ENCODE measurements at regions of chr10 and their contacts with region 1.

Region 1: DNA sequence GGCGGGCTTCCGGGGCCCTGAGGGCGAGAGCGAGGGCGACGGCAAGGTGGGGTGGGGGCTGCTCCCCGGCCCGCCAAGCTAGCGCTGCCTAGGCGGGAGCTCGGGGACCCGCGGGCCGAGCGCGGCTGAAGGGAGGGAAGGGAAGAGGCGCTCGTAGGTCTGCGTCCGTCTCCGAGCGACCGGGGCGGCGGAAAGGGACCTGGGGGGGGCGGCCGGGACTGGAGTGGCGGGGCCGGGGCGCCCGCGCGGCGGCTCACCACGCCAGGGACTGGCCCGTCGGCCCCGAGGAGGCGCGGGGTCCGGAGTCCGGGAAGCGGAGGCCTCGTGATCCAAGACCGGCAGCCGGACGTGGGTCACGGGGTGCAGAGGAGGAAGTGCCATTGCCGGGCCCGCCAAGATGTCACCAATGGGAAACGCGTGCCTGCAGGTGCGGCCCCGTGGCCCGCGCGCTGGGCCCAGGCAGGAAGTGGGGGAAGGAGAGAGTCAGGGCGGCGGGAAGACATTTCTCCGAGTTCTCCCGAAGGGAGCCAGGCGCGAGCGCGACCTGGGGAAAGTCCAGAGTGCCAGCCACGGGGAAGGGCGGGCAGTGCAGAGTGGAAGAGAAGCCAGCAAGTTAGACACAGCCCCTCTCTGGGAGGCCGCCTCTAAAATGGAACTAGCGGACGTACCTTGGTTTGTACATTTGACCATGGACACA is 11.9 kb downstream of the HNRNPF start:
- DNase-seq: peak; percentile 76 to 94
- H3K4me3 ChIP-seq: peak overlapping the region; percentile 75 to 81
- H3K27ac ChIP-seq: peak overlapping the region; percentile 97 to 99
- H3K4me1 ChIP-seq: peaks cover 7 to 40% of the 10 kb centered on the region in 2 donors
- H3K27me3 ChIP-seq: no peaks in the 10 kb centered on the region
- CTCF ChIP-seq: no peak

Region 2: DNA sequence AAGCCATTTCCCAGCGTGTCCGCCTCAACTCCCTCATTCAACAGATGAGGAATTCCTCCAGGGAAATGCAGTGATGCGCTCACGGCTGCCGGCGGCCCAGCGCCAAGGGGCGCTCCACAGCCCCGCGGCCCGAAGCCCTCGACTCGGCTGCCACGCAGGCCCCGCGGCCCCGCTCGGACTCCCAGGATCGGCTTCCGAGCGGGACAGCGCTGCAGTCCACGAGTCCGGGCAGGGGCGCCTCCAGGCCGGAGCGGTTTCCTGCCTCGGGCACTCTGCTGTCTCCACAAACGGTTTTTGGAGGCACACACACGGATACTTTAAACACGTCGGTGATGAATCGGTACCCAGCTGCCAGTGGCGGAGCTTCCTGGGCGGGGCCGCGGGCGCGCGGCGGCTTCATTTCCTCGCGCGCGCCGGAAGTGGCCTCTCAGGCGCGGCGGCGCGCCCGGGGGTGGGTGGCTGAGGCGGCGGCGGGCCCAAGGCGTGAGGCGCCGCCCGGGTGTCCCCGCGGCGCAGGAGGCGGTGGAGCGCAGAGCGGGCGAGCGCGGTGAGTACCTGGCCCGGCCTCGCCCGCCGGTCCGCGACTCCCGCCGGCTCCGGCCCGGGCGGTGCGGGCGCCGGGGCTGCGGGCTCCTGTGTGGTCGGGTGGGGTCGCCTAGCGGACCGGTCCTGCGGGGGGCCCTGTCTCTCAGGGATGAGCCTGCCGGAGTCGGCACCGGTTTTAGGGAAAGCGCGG is 258.9 kb before region 1 on chr10 and contains the start of gene CSGALNACT2:
- intact Hi-C with region 1: loop called (anchors 2 kb)
- DNase-seq: peak; percentile 64 to 95
- H3K4me3 ChIP-seq: peak within 1 kb of the TSS; percentile 85 to 87
- H3K27ac ChIP-seq: peak within 1 kb of the TSS; percentile 92 to 98
- H3K4me1 ChIP-seq: peaks cover 0 to 15% of the 10 kb centered on the region in 2 donors
- H3K27me3 ChIP-seq: no peaks in the 10 kb centered on the region
- CTCF ChIP-seq: no peak
- total RNA-seq, gene CSGALNACT2: 19.7 TPM

Region 3: GRCh38 chr10:43420369-43421200 is 23.5 kb after region 1 on chr10:
- intact Hi-C with region 1: loop called (anchors 2 kb)
- DNase-seq: peak; percentile 63 to 94
- H3K4me3 ChIP-seq: peak overlapping the region; percentile 72 to 73
- H3K27ac ChIP-seq: peak overlapping the region; percentile 94 to 95
- H3K4me1 ChIP-seq: peaks cover 0 to 12% of the 10 kb centered on the region in 2 donors
- H3K27me3 ChIP-seq: no peaks in the 10 kb centered on the region
- CTCF ChIP-seq: peak in 1 of 3 experiments; percentile 14

Region 4: DNA sequence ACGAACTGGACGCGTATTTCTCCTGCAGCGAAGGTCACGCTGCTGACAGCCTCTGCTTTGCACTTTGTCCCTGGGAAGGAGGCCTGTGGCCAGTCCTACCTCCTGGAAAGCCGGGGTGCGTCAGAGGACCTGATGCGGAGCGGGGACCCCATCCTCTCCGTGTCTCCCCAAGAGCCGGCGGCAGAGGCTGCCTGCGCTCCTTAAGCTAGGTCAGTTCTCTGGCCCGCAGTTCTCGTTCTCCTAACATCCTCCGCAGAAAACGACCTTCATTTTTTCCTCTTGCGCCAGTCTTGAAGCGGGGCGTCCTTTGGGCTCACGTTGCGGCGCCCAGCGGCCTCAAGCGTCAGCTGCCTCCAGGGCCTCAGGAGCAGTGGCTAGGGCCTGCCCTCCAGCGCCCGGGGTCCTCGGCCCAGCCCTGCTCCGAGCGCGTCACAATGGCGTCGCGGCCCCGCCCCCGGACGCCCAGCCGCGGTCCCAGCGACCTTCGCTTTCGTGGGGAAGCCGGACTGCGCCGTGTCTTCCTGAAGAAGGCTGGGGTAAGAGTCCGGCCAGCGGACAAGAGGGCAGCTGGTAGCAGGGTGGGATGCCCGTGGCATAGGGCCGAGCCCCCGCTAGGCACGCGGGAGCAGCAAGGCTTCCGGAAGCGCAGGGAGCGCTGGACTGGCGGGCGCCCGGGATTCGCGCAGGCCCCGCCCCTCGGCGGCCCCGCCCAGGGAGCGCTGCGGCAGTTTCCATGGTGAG is 39.5 kb after region 1 on chr10 and contains the start of gene ZNF487:
- intact Hi-C with region 1: loop called (anchors 2 kb)
- DNase-seq: peak; percentile 76 to 95
- H3K4me3 ChIP-seq: peak within 1 kb of the TSS; percentile 77
- H3K27ac ChIP-seq: peak within 1 kb of the TSS; percentile 92 to 97
- H3K4me1 ChIP-seq: peaks cover 0 to 12% of the 10 kb centered on the region in 2 donors
- H3K27me3 ChIP-seq: no peaks in the 10 kb centered on the region
- CTCF ChIP-seq: peak in 1 of 3 experiments; percentile 12
- total RNA-seq, gene ZNF487: 3.9 TPM

Measured in ascending aorta (tissue), 2 donors.